ENCODE measurements at regions of chr17 and their contacts with region 1.

Region 1: GRCh38 chr17:29219378-29220047 is 27.1 kb upstream of the CRYBA1 start:
- DNase-seq: peak; percentile 85
- H3K4me3 Mint-ChIP-seq: no peak overlapping the region
- H3K27ac Mint-ChIP-seq: no peak overlapping the region
- H3K4me1 Mint-ChIP-seq: peaks cover 4% of the 10 kb centered on the region
- H3K27me3 Mint-ChIP-seq: no peaks in the 10 kb centered on the region

Region 2: GRCh38 chr17:29124117-29124924 is 95.2 kb before region 1 on chr17:
- CTCF ChIA-PET with region 1: interaction called, 44 read pairs
- intact Hi-C with region 1: loop called (anchors 1 kb)
- DNase-seq: peak; percentile 68
- H3K4me3 Mint-ChIP-seq: no peak overlapping the region
- H3K27ac Mint-ChIP-seq: no peak overlapping the region
- H3K4me1 Mint-ChIP-seq: peaks cover 2% of the 10 kb centered on the region
- H3K27me3 Mint-ChIP-seq: no peaks in the 10 kb centered on the region

Region 3: DNA sequence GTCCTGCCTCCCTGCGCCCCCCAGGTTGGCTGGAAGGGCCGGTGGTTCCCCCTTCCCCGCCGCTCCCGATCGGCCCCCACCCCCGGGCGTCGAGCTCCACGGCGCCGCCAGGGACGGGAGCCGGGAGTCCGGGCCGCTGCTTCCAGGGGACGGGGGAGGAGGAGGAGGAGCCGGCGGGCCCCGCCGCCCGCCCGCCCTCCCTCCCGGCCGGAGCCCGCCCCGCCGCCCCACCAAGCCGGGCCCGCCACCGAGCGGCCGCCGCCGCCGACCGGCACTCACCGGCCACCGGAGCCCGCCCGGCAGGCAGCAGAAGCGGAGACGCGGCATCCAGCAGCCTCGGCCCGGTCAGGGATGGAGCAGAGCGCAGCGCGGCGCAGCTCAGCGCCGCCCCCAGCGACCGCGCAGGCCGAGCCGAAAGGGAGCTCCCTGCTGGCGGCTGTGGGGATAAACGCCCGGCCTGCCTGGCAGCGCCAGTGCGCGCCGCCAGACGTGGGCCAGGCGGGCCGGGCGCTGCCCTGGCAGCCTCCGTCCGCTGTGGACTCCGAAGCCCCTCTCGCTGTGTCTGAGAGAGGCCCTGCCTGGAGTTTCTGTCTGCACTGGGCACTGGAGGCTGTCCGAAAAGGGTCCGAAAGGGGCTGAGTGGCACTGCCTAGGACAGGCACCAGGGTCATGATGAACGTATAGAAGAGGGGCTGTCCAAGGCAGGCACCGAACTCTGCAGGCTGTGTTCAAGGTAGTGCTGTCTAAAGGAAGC is 39.3 kb before region 1 on chr17 and contains the start of gene MYO18A:
- CTCF ChIA-PET with region 1: interaction called, 10 read pairs
- intact Hi-C with region 1: no loop called
- DNase-seq: peak; percentile 84
- H3K4me3 Mint-ChIP-seq: peak within 1 kb of the TSS; percentile 55
- H3K27ac Mint-ChIP-seq: no peak within 1 kb of the TSS
- H3K4me1 Mint-ChIP-seq: peaks cover 26% of the 10 kb centered on the region
- H3K27me3 Mint-ChIP-seq: no peaks in the 10 kb centered on the region
- total RNA-seq, gene MYO18A: 23.8 to 25.0 TPM

Region 4: GRCh38 chr17:29195465-29196081 is 23.9 kb before region 1 on chr17:
- CTCF ChIA-PET with region 1: interaction called, 45 read pairs
- intact Hi-C with region 1: no loop called
- DNase-seq: no peak
- H3K4me3 Mint-ChIP-seq: no peak overlapping the region
- H3K27ac Mint-ChIP-seq: no peak overlapping the region
- H3K4me1 Mint-ChIP-seq: peaks cover 3% of the 10 kb centered on the region
- H3K27me3 Mint-ChIP-seq: peaks cover 2% of the 10 kb centered on the region

Region 5: GRCh38 chr17:29233301-29233700 is 13.8 kb after region 1 on chr17:
- CTCF ChIA-PET with region 1: interaction called, 10 read pairs
- intact Hi-C with region 1: no loop called
- DNase-seq: no peak
- H3K4me3 Mint-ChIP-seq: no peak overlapping the region
- H3K27ac Mint-ChIP-seq: no peak overlapping the region
- H3K4me1 Mint-ChIP-seq: no peaks in the 10 kb centered on the region
- H3K27me3 Mint-ChIP-seq: no peaks in the 10 kb centered on the region

Region 6: GRCh38 chr17:29252101-29252866 is 32.8 kb after region 1 on chr17:
- CTCF ChIA-PET with region 1: interaction called, 18 read pairs
- intact Hi-C with region 1: no loop called
- DNase-seq: no peak
- H3K4me3 Mint-ChIP-seq: no peak overlapping the region
- H3K27ac Mint-ChIP-seq: no peak overlapping the region
- H3K4me1 Mint-ChIP-seq: peaks cover 11% of the 10 kb centered on the region
- H3K27me3 Mint-ChIP-seq: no peaks in the 10 kb centered on the region

Region 7: DNA sequence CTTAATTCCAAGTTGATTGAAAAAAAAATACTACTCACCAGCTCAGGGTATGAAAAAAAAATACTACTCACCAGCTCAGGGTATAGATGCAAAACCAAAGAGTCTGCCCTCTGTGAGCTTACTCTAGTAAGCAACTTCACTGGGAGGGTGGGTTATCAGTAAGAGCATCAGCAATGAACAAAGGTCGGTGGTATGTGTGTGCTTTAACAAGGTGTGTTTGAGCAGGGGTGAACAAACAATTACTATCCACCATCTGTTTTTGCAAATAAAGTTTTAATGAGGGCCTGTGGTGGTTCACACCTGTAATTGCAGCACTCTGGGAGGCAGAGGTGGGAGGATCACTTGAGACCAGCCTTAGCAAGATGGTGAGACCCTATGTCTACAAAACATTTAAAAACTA is 54.4 kb after region 1 on chr17:
- CTCF ChIA-PET with region 1: no interaction called
- intact Hi-C with region 1: no loop called
- DNase-seq: no peak
- H3K4me3 Mint-ChIP-seq: no peak overlapping the region
- H3K27ac Mint-ChIP-seq: no peak overlapping the region
- H3K4me1 Mint-ChIP-seq: peaks cover 54% of the 10 kb centered on the region
- H3K27me3 Mint-ChIP-seq: no peaks in the 10 kb centered on the region

Measured in activated naive CD4-positive, alpha-beta T cell treated with anti-CD3 and anti-CD28 coated beads for 36 hours (primary cell).